CD4-positive, alpha-beta T cell (primary cell): ENCODE measurements at regions of chr12 and their contacts with region 1.

Region 1: GRCh38 chr12:92570056-92570753 is 132.6 kb upstream of the PLEKHG7 start:
- DNase-seq: peak in 9 of 14 experiments; percentile 20 to 83 (median 33)
- ATAC-seq: peak; percentile 95
- H3K4me3 ChIP-seq: no peak overlapping the region
- H3K4me3 Mint-ChIP-seq: no peak overlapping the region
- H3K27ac ChIP-seq: no peak overlapping the region
- H3K27ac Mint-ChIP-seq: no peak overlapping the region
- H3K4me1 ChIP-seq: no peaks in the 10 kb centered on the region
- H3K4me1 Mint-ChIP-seq: no peaks in the 10 kb centered on the region
- H3K27me3 ChIP-seq: no peaks in the 10 kb centered on the region
- H3K27me3 Mint-ChIP-seq: no peaks in the 10 kb centered on the region
- CTCF ChIP-seq: peak; percentile 96

Region 2: GRCh38 chr12:91361864-91362263 is 1208.3 kb before region 1 on chr12:
- CTCF ChIA-PET with region 1: no interaction called
- POLR2A ChIA-PET with region 1: no interaction called
- intact Hi-C with region 1: loop called (anchors 1 to 2 kb)
- DNase-seq: peak in 3 of 14 experiments; percentile 46 to 61 (median 59)
- ATAC-seq: no peak
- H3K4me3 ChIP-seq: no peak overlapping the region
- H3K4me3 Mint-ChIP-seq: no peak overlapping the region
- H3K27ac ChIP-seq: no peak overlapping the region
- H3K27ac Mint-ChIP-seq: no peak overlapping the region
- H3K4me1 ChIP-seq: no peaks in the 10 kb centered on the region
- H3K4me1 Mint-ChIP-seq: no peaks in the 10 kb centered on the region
- H3K27me3 ChIP-seq: no peaks in the 10 kb centered on the region
- H3K27me3 Mint-ChIP-seq: peaks cover 7% of the 10 kb centered on the region
- CTCF ChIP-seq: peak; percentile 64

Region 3: GRCh38 chr12:91753649-91754048 is 816.6 kb before region 1 on chr12:
- CTCF ChIA-PET with region 1: no interaction called
- POLR2A ChIA-PET with region 1: interaction called, 3 read pairs
- intact Hi-C with region 1: loop called (anchors 2 to 10 kb)
- DNase-seq: no peak
- ATAC-seq: no peak
- H3K4me3 ChIP-seq: no peak overlapping the region
- H3K4me3 Mint-ChIP-seq: no peak overlapping the region
- H3K27ac ChIP-seq: no peak overlapping the region
- H3K27ac Mint-ChIP-seq: no peak overlapping the region
- H3K4me1 ChIP-seq: no peaks in the 10 kb centered on the region
- H3K4me1 Mint-ChIP-seq: no peaks in the 10 kb centered on the region
- H3K27me3 ChIP-seq: no peaks in the 10 kb centered on the region
- H3K27me3 Mint-ChIP-seq: no peaks in the 10 kb centered on the region
- CTCF ChIP-seq: no peak

Region 4: DNA sequence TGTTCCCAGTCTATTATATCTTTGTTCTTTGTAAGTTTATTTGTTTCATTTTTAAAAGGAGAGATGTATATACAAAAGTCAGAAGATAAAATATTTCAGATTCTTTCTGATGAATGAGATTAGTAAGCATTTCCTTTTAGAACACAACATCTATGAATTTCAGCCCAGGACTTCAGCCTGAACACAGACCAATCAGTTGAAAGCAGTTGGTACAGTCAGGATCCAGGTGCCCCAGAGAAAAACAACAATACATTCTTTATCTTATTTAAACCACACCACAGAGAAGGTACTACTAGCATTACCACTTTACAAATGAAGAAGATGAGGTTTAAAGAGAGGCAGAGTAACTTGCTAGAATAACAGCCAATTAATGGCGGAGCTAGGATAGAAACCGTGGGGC is 310.4 kb before region 1 on chr12:
- CTCF ChIA-PET with region 1: interaction called, 3 read pairs
- POLR2A ChIA-PET with region 1: no interaction called
- intact Hi-C with region 1: loop called in 1 of 2 experiments (anchors 5 kb)
- DNase-seq: no peak
- ATAC-seq: no peak
- H3K4me3 ChIP-seq: no peak overlapping the region
- H3K4me3 Mint-ChIP-seq: no peak overlapping the region
- H3K27ac ChIP-seq: no peak overlapping the region
- H3K27ac Mint-ChIP-seq: peak overlapping the region; percentile 46
- H3K4me1 ChIP-seq: peaks cover 2% of the 10 kb centered on the region
- H3K4me1 Mint-ChIP-seq: peaks cover 39% of the 10 kb centered on the region
- H3K27me3 ChIP-seq: no peaks in the 10 kb centered on the region
- H3K27me3 Mint-ChIP-seq: no peaks in the 10 kb centered on the region
- CTCF ChIP-seq: no peak

Region 5: GRCh38 chr12:92505254-92506231 is 64.7 kb before region 1 on chr12:
- CTCF ChIA-PET with region 1: interaction called, 3 read pairs
- POLR2A ChIA-PET with region 1: interaction called, 10 read pairs
- intact Hi-C with region 1: no loop called
- DNase-seq: peak; percentile 10 to 75 (median 34)
- ATAC-seq: peak; percentile 75
- H3K4me3 ChIP-seq: peak overlapping the region; percentile 41
- H3K4me3 Mint-ChIP-seq: peak overlapping the region; percentile 84
- H3K27ac ChIP-seq: peak overlapping the region; percentile 38 to 79
- H3K27ac Mint-ChIP-seq: peak overlapping the region; percentile 90
- H3K4me1 ChIP-seq: peaks cover 32% of the 10 kb centered on the region
- H3K4me1 Mint-ChIP-seq: peaks cover 29% of the 10 kb centered on the region
- H3K27me3 ChIP-seq: no peaks in the 10 kb centered on the region
- H3K27me3 Mint-ChIP-seq: no peaks in the 10 kb centered on the region
- CTCF ChIP-seq: no peak

Region 6: DNA sequence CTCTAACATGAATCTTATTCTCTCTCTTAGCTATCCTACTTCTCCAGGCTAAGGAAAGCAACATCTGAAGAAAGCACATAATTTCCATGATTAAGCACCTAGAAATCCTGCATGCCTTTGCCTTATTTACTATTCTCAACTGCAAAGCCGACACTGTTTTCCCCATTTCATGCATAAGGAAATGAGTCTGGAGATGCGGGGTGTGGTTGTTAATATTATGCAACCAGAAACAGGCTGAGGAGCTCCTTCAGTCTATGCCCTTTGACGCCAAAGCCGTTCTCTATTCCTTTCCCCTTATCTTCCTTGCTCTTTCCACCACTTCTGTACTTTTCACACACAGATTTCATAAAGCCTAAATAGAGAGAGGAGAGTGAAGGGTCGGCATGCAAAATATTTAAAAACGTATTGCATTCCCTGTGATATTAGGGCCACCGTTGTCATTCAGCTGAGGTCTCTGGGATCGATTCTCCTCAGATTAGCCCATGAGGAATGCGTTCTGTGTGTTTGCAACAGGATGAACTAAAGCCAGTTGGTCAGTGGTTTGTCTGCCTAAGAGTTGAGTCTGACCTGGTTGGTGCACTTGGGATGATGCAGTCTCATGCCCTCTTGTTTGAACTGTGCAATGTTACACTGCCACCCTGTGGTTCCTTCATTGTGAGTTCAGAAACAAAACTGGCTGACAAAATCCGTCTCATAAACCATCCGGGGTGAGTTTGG is 79.5 kb after region 1 on chr12:
- CTCF ChIA-PET with region 1: interaction called, 4 read pairs
- POLR2A ChIA-PET with region 1: no interaction called
- intact Hi-C with region 1: loop called (anchors 2 to 5 kb)
- DNase-seq: peak; percentile 33 to 85 (median 50)
- ATAC-seq: peak; percentile 91
- H3K4me3 ChIP-seq: no peak overlapping the region
- H3K4me3 Mint-ChIP-seq: no peak overlapping the region
- H3K27ac ChIP-seq: no peak overlapping the region
- H3K27ac Mint-ChIP-seq: no peak overlapping the region
- H3K4me1 ChIP-seq: peaks cover 3% of the 10 kb centered on the region
- H3K4me1 Mint-ChIP-seq: no peaks in the 10 kb centered on the region
- H3K27me3 ChIP-seq: no peaks in the 10 kb centered on the region
- H3K27me3 Mint-ChIP-seq: no peaks in the 10 kb centered on the region
- CTCF ChIP-seq: peak; percentile 81

Region 7: DNA sequence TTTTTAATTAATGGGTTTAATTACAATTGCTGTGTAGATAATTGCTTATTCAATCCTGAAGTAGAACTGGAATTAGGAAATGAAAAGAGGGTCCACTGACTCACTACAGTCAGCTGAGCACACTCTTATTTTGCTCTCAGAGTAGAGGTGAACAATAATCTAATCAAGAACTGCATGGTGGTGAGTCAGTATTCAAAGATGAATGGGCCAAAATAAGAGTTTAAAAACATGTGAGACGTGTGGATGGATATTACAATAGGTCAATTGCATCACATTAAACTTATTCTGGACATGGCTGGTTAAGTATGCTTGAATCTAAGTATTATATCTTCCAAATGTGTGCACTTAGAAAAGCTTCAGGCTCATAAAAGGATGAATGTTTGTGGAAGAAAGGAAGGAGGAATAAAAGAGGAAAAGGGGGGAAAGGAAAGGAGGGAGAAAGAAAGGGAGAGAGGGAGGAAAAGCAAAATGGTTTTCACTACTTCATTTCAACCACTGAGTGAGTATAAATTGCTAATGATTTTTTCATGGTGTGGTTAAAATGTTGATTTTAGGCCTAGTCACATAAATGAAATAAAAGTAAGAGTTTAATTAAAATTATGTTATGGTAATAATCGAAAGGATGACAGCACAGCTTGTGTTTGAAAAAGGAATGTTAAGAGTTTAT is 385.9 kb after region 1 on chr12:
- CTCF ChIA-PET with region 1: no interaction called
- POLR2A ChIA-PET with region 1: no interaction called
- intact Hi-C with region 1: no loop called
- DNase-seq: no peak
- ATAC-seq: no peak
- H3K4me3 ChIP-seq: no peak overlapping the region
- H3K4me3 Mint-ChIP-seq: no peak overlapping the region
- H3K27ac ChIP-seq: no peak overlapping the region
- H3K27ac Mint-ChIP-seq: no peak overlapping the region
- H3K4me1 ChIP-seq: no peaks in the 10 kb centered on the region
- H3K4me1 Mint-ChIP-seq: no peaks in the 10 kb centered on the region
- H3K27me3 ChIP-seq: no peaks in the 10 kb centered on the region
- H3K27me3 Mint-ChIP-seq: peaks cover 4% of the 10 kb centered on the region
- CTCF ChIP-seq: no peak